Activated B cell treated with CpG ODN at 0.5 μM for 24 hours (primary cell): ENCODE measurements at regions of chr6 and their contacts with region 1.

Region 1: GRCh38 chr6:14210663-14211561 is 93.3 kb downstream of the CD83 start:
- DNase-seq: peak; percentile 98
- ATAC-seq: peak; percentile 90
- H3K4me3 Mint-ChIP-seq: peak overlapping the region; percentile 85
- H3K27ac Mint-ChIP-seq: peak overlapping the region; percentile 88
- H3K4me1 Mint-ChIP-seq: peaks cover 45% of the 10 kb centered on the region
- H3K27me3 Mint-ChIP-seq: no peaks in the 10 kb centered on the region
- CTCF ChIP-seq: no peak

Region 2: DNA sequence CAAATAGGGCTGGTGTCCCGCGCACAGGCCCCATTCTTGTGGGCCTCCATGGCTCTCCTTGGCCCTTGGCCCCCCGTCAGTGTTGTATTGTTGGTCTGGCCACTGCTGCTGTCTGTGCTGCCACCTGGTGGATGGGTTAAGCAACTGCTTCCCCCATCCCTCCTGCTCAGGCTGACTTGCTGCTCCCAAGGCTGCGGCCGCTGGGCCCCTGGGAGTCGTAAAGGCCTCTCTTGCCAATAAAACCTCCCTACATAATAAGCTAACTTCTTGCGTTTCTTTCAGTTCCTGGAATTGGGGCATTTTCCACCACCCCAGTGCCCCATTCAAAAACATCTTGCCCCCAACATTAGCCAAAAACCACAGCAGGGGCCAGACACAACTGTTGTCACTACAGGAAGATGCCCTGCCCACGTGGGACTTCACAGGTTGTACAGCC is 66.2 kb before region 1 on chr6:
- CTCF ChIA-PET with region 1: no interaction called
- POLR2A ChIA-PET with region 1: no interaction called
- intact Hi-C with region 1: no loop called
- DNase-seq: peak; percentile 63
- ATAC-seq: peak; percentile 84
- H3K4me3 Mint-ChIP-seq: peak overlapping the region; percentile 20
- H3K27ac Mint-ChIP-seq: peak overlapping the region; percentile 62
- H3K4me1 Mint-ChIP-seq: peaks cover 42% of the 10 kb centered on the region
- H3K27me3 Mint-ChIP-seq: no peaks in the 10 kb centered on the region
- CTCF ChIP-seq: peak; percentile 57

Region 3: DNA sequence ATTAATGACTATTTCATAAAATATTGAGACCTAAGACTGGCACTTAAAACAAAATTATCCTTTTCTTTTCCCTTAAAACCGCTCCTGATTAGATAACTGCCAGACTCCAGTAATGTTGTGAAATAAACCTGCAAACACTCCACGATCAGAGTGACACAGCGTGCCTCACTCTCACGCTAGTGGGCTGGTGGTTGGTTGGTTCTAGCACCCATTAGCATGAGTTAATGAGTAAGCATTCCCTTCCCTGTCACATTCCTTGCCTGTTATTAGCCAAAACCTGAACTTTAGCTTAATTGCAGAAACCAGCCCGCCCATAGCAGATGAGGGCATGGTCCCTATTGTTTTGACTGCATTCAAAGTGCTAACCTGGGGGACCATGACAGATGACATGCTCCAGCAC is 100.0 kb after region 1 on chr6:
- CTCF ChIA-PET with region 1: interaction called, 5 read pairs
- POLR2A ChIA-PET with region 1: interaction called, 4 read pairs
- intact Hi-C with region 1: loop called (anchors 2 kb)
- DNase-seq: no peak
- ATAC-seq: no peak
- H3K4me3 Mint-ChIP-seq: no peak overlapping the region
- H3K27ac Mint-ChIP-seq: peak overlapping the region; percentile 87
- H3K4me1 Mint-ChIP-seq: peaks cover 84% of the 10 kb centered on the region
- H3K27me3 Mint-ChIP-seq: no peaks in the 10 kb centered on the region
- CTCF ChIP-seq: no peak

Region 4: GRCh38 chr6:14321992-14322772 is 111.3 kb after region 1 on chr6:
- CTCF ChIA-PET with region 1: no interaction called
- POLR2A ChIA-PET with region 1: no interaction called
- intact Hi-C with region 1: no loop called
- DNase-seq: no peak
- ATAC-seq: no peak
- H3K4me3 Mint-ChIP-seq: no peak overlapping the region
- H3K27ac Mint-ChIP-seq: no peak overlapping the region
- H3K4me1 Mint-ChIP-seq: peaks cover 32% of the 10 kb centered on the region
- H3K27me3 Mint-ChIP-seq: no peaks in the 10 kb centered on the region
- CTCF ChIP-seq: no peak

Region 5: DNA sequence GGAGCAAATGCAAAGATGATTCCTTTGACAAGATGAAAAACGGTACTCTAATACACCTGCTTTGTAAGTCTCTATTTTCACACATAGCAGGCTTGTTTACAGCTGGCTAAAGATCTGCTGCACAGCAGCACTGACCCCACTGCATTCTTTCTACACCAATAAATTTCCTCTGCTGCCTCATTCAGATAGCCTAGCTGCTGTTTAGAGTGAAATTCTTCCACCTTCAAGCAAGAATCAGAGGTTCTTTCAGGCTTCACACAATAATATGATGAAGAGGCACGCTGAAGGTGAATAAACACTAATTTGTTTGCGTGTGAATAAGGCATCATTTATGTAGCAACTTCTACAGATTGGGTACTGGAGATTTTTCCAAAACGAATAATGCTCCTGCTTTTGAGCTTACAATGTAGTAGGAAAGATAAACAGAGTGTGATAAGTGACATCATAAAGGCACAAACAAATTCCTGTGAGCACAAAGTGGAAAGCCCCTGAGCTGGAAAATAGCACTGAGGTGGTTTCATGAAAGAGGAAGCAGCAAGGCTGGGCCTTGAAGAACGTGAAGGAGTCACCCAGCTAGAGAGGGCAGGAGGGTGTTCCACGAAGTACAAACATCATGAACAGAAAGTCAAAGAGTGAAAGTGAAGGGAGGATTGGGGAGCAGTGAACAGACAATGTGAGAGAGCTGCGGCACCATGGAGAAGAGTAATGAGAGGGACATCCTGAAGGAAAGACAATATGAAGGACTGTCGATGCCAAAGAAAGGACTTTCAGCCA is 450.1 kb after region 1 on chr6:
- CTCF ChIA-PET with region 1: no interaction called
- POLR2A ChIA-PET with region 1: no interaction called
- intact Hi-C with region 1: loop called (anchors 2 kb)
- DNase-seq: peak; percentile 38
- ATAC-seq: peak; percentile 75
- H3K4me3 Mint-ChIP-seq: no peak overlapping the region
- H3K27ac Mint-ChIP-seq: no peak overlapping the region
- H3K4me1 Mint-ChIP-seq: peaks cover 24% of the 10 kb centered on the region
- H3K27me3 Mint-ChIP-seq: no peaks in the 10 kb centered on the region
- CTCF ChIP-seq: no peak

Region 6: GRCh38 chr6:15148356-15148946 is 937.5 kb after region 1 on chr6:
- CTCF ChIA-PET with region 1: no interaction called
- POLR2A ChIA-PET with region 1: no interaction called
- intact Hi-C with region 1: loop called (anchors 5 kb)
- DNase-seq: no peak
- ATAC-seq: peak; percentile 62
- H3K4me3 Mint-ChIP-seq: no peak overlapping the region
- H3K27ac Mint-ChIP-seq: peak overlapping the region; percentile 38
- H3K4me1 Mint-ChIP-seq: peaks cover 41% of the 10 kb centered on the region
- H3K27me3 Mint-ChIP-seq: no peaks in the 10 kb centered on the region
- CTCF ChIP-seq: no peak

Region 7: DNA sequence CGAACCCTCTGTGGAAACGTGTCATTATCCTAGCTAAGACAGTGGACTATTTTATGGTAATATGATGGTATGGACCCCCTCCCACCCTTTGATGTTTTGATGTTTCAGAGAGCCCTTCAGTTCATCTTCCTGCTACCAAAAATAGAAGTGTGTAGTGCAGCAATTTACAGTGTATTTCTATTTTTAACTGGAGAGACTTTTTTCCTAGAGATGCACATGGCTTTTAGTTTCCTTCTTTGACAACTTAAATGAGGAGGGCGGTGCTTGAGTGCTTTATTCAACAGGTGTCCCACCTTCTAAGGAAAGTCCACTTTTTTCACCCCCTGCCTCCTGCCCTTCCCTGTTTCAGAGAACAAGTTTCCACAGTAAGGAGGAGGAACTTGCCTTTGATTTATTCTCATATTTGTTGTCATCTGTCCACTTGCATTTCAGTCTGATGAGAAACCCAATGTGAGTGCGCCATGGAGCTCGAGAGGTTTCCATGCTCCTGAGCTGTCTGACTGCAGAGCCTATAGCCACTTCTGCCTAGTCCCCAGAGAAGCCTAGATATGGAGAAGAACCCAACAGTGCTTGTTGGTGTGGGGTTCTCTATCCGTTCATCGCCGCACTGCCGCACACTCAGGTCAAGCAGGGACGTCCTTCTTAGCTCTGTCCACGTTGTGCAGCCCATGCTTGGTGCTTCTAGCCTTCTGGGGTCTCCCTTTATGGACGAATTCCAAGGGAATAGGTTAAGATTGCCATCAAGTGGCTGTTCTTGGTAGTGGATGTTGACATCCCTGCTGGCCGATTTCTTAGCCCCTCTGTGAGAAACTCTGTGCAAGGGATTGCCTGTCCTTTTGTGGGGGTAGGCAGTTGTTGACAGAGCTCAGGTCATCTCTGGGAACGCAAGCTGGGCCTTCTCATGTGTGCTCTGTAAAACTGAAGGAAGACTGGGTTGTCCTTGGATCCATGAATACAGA is 1179.1 kb after region 1 on chr6:
- CTCF ChIA-PET with region 1: interaction called, 9 read pairs
- POLR2A ChIA-PET with region 1: no interaction called
- intact Hi-C with region 1: loop called (anchors 1 kb)
- DNase-seq: no peak
- ATAC-seq: peak; percentile 69
- H3K4me3 Mint-ChIP-seq: peak overlapping the region; percentile 42
- H3K27ac Mint-ChIP-seq: peak overlapping the region; percentile 30
- H3K4me1 Mint-ChIP-seq: peaks cover 71% of the 10 kb centered on the region
- H3K27me3 Mint-ChIP-seq: no peaks in the 10 kb centered on the region
- CTCF ChIP-seq: no peak

Region 8: GRCh38 chr6:15491255-15491985 is 1280.5 kb after region 1 on chr6:
- CTCF ChIA-PET with region 1: no interaction called
- POLR2A ChIA-PET with region 1: no interaction called
- intact Hi-C with region 1: loop called (anchors 1 kb)
- DNase-seq: peak; percentile 35
- ATAC-seq: peak; percentile 82
- H3K4me3 Mint-ChIP-seq: no peak overlapping the region
- H3K27ac Mint-ChIP-seq: no peak overlapping the region
- H3K4me1 Mint-ChIP-seq: peaks cover 32% of the 10 kb centered on the region
- H3K27me3 Mint-ChIP-seq: no peaks in the 10 kb centered on the region
- CTCF ChIP-seq: peak; percentile 95